HepG2 (cell line): ENCODE measurements at regions of chr16 and their contacts with region 1.

Region 1: GRCh38 chr16:11345040-11345862 is at the start of gene RMI2:
- DNase-seq: peak; percentile 99
- ATAC-seq: peak; percentile 95
- H3K4me3 ChIP-seq: peak within 1 kb of the TSS; percentile 72 to 75 (median 74)
- H3K27ac ChIP-seq: peak within 1 kb of the TSS; percentile 59
- H3K4me1 ChIP-seq: peaks cover 83% of the 10 kb centered on the region
- H3K27me3 ChIP-seq: no peaks in the 10 kb centered on the region; a peak in 1 of 5 replicates
- CTCF ChIP-seq: no peak
- EP300 ChIP-seq: no peak
- POLR2A ChIP-seq: peak; percentile 51 to 52; a peak in 3 of 4 replicates
- RAD21 ChIP-seq: peak; percentile 74; the same call in 1 of the 2 replicates
- total RNA-seq, gene RMI2: 55.7 and 65.3 TPM in 2 replicates

Region 2: DNA sequence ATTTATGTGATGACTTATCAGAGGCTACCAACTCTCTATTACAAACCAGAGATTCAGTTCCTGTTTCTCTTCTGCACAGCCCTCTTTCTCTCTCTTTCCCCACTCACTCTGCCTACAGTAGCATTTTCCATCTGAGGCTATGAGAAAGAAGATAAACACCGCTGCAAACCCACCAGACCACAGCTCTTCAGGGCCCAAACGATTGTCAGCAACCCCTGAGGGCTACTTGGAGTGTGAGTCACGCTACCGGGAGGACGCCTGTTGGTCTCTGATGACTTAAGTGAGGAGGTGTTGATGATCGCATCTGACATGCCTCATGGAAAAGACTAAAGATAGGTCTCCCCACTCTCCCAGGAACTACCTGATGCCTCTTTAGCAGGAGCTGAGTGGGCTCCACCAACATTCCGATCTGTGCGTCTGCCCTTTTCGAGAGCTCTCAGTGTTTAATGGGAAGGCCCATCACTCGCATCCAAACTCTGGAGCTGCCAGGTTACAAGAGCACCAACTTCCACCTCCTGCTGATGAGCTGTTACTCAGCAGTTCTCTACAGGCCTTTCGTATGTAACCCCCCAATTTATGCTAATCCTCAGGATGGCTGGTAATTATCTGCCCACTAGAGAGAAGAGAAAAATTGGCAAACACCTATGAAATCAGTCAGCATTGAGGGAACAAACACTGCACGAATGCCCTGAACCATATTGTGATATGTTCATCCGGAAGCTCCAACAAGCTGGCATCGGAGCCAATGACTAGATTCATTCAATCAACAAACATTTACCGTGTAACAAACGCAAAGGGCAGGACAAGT is 1172.2 kb before region 1 on chr16:
- CTCF ChIA-PET with region 1: no interaction called
- POLR2A ChIA-PET with region 1: no interaction called
- in situ Hi-C with region 1: no loop called
- intact Hi-C with region 1: loop called (anchors 5 kb)
- DNase-seq: no peak
- ATAC-seq: no peak
- H3K4me3 ChIP-seq: no peak overlapping the region
- H3K27ac ChIP-seq: no peak overlapping the region
- H3K4me1 ChIP-seq: peaks cover 11% of the 10 kb centered on the region
- H3K27me3 ChIP-seq: peaks cover 2 to 4% of the 10 kb centered on the region in 2 experiments; a peak in 3 of 5 replicates
- CTCF ChIP-seq: no peak
- EP300 ChIP-seq: no peak
- POLR2A ChIP-seq: no peak
- RAD21 ChIP-seq: no peak

Region 3: GRCh38 chr16:11201498-11202259 is 143.6 kb before region 1 on chr16:
- CTCF ChIA-PET with region 1: no interaction called
- POLR2A ChIA-PET with region 1: no interaction called
- in situ Hi-C with region 1: no loop called
- intact Hi-C with region 1: no loop called
- DNase-seq: peak; percentile 67
- ATAC-seq: peak; percentile 7; the same call in 2 of the 3 replicates
- H3K4me3 ChIP-seq: peak overlapping the region in 1 of 3 experiments; percentile 26; a peak in 1 of 6 replicates
- H3K27ac ChIP-seq: no peak overlapping the region
- H3K4me1 ChIP-seq: peaks cover 55% of the 10 kb centered on the region
- H3K27me3 ChIP-seq: peaks cover 11 to 64% of the 10 kb centered on the region in 2 experiments
- CTCF ChIP-seq: no peak
- EP300 ChIP-seq: no peak
- POLR2A ChIP-seq: no peak
- RAD21 ChIP-seq: no peak

Region 4: DNA sequence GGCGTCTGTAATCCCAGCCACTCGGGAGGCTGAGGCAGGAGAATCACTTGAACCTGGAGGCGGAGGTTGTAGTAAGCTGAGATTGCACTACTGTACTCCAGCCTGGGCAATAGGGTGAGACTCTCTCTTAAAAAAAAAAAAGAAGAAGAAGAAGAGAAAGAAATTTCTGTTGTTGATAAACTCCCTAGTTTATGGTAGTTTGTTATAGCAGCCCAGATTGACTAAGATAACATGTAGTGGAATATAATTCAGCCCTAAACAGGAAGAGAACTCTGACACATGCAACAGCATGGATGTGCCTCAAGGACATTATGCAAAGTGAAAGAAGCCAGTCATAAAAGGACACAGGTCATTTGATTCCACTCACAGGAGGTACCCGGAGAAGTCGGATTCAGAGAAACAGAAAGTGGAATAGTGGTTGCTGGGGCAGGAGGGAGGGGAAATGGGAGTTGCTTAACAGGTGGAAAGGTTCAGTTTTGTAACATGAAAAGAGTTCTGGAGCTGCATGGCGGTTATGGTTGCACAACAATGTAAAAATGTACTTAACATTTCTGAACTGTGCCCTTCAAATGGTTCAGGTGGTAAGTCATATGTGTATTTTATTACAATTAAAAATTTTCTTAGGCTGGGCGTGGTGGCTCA is 38.1 kb before region 1 on chr16:
- CTCF ChIA-PET with region 1: no interaction called
- POLR2A ChIA-PET with region 1: interaction called, 7 read pairs
- in situ Hi-C with region 1: no loop called
- intact Hi-C with region 1: loop called (anchors 2 kb)
- DNase-seq: peak; percentile 98
- ATAC-seq: peak; percentile 53
- H3K4me3 ChIP-seq: 0 out of 6 replicates have a peak overlapping the region, but pooled peaks of 1 of the 3 experiments have one; percentile 20
- H3K27ac ChIP-seq: peak overlapping the region; percentile 89
- H3K4me1 ChIP-seq: peaks cover 84% of the 10 kb centered on the region
- H3K27me3 ChIP-seq: no peaks in the 10 kb centered on the region
- CTCF ChIP-seq: no peak
- EP300 ChIP-seq: peak; percentile 94
- POLR2A ChIP-seq: no peak
- RAD21 ChIP-seq: peak; percentile 29; the same call in 1 of the 2 replicates